ENCODE measurements at regions of chr2 and their contacts with region 1.

Region 1: GRCh38 chr2:191555092-191555742 is 122.7 kb upstream of the NABP1 start:
- DNase-seq: peak; percentile 80
- H3K4me3 ChIP-seq: no peak overlapping the region
- CTCF ChIP-seq: peak; percentile 67

Region 2: GRCh38 chr2:190984595-190984994 is 570.6 kb before region 1 on chr2:
- in situ Hi-C with region 1: no loop called
- DNase-seq: peak; percentile 75
- H3K4me3 ChIP-seq: no peak overlapping the region
- CTCF ChIP-seq: no peak

Region 3: GRCh38 chr2:191462370-191462769 is 92.8 kb before region 1 on chr2:
- in situ Hi-C with region 1: no loop called
- DNase-seq: no peak
- H3K4me3 ChIP-seq: no peak overlapping the region
- CTCF ChIP-seq: no peak

Region 4: DNA sequence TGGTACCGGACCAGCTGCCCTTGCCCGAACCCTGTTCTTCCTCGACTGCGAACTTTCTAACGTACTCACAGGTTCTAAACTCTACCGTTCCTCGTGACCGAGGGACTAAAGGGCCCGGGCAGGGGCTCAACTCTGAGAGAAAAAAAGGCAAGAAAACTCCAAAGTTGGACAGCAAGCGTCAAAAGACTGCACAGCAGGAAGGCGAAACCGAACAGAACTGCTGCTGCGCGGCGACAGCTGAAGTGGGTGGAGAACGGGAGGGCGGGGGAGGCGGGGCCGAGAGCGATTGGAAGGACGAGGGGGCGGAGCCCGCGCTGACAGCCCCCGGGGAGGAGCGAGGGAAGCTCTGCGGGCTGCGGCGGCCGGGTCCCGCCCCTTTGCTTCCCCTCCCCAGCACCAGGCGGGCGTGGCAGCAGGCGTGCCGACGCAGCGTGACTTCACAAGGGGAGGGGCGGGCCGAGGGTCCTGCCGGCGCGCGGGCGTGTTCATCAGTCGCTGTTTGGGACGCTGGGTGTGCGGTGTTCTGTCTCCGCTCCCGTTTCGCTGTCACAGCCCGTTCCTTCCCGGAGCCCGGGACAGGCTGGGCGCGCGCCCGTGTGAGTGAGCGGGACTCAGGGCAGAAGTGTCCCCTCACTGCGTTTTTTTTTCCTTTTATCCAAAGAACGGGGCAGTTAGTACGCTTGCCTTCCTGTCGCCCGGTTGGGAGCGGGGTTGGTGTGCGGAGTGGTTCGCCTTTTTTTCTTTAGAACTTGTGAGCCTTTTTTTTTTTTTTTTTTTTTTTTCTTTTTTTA is 122.6 kb after region 1 on chr2 and contains the start of gene NABP1:
- in situ Hi-C with region 1: loop called (anchors 25 kb)
- DNase-seq: peak; percentile 99
- H3K4me3 ChIP-seq: peak within 1 kb of the TSS; percentile 83
- CTCF ChIP-seq: no peak

Region 5: DNA sequence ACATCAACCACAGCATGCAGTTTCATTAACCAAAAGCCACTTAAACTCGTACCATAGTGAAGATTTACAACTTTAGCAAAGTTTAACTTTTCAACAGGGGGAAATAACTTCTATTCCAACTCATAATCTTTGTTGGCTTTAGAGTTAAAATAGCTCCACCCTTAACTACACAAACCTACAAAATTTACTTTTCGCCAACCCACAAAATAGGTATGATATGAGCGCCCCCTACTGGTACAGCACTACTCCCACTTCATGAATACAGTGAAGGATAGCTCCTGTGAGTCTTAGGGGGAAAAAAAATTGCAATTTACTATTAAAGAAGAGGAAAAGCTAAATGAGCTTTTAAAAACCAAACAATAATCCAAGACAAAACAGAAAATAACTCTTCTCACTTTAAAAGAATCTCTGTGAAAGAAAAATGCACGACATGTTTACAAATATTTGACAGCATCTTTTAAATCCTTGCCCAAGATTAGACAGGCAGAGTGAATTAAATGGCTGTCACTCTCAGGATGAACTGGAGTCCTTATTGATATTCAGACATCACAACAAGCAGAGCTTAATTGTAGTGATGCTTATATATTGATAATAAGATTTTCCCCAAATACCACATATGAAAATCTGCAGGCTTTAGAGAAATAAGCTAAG is 607.3 kb after region 1 on chr2:
- in situ Hi-C with region 1: loop called (anchors 25 kb)
- DNase-seq: peak; percentile 82
- H3K4me3 ChIP-seq: no peak overlapping the region
- CTCF ChIP-seq: peak; percentile 89